ENCODE measurements at regions of chr4 and their contacts with region 1.

Region 1: GRCh38 chr4:15956179-15956850 is 6.7 kb downstream of the FGFBP2 start:
- DNase-seq: peak; percentile 86
- ATAC-seq: peak; percentile 82

Region 2: GRCh38 chr4:15805583-15806517 is 150.5 kb before region 1 on chr4:
- intact Hi-C with region 1: loop called (anchors 10 kb)
- DNase-seq: no peak
- ATAC-seq: peak; percentile 82